ENCODE measurements at regions of chr1 and their contacts with region 1.

Region 1: DNA sequence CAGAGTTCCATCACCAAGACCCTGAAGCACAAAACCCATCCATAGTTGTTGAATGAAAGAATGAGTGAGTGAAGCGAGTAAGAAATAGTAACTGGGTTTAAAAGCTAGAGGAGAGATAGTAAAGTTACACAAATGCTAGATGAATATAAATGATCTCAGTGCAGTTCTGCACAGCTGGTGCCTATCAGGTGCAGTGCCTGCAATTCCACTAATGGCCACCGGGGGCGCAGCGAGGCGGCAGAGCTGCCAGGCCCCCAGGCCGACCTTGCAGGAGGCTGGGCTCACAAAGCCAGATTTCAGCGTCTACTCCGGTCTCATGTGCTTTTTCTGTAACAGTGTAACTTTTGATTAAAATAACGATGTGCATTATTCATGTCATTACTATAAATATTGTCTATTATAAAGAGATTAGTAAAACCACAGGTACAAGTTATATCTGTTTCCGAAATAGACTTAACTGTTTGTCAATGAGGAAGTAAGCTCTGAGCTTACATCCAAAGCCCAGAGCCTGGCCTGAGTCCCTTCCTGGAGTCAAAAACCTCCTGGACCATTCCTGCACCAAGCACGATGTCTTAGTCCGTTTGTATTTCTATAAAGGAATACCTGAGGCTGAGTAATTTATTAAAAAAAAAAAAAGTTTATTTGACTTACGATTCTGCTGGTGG is 477.6 kb downstream of the NPHP4 start:
- DNase-seq: peak; percentile 37 to 95 (median 59)
- ATAC-seq: peak; percentile 90
- H3K4me3 ChIP-seq: no peak overlapping the region
- H3K27ac ChIP-seq: no peak overlapping the region
- H3K4me1 ChIP-seq: no peaks in the 10 kb centered on the region
- H3K27me3 ChIP-seq: peaks cover 0 to 36% of the 10 kb centered on the region in 2 donors
- CTCF ChIP-seq: peak; percentile 100

Region 2: GRCh38 chr1:5745776-5746610 is 231.3 kb after region 1 on chr1:
- intact Hi-C with region 1: loop called in 1 of 2 experiments (anchors 5 kb)
- DNase-seq: peak in 3 of 4 donors; percentile 45 to 85 (median 77)
- ATAC-seq: peak; percentile 95
- H3K4me3 ChIP-seq: no peak overlapping the region
- H3K27ac ChIP-seq: no peak overlapping the region
- H3K4me1 ChIP-seq: no peaks in the 10 kb centered on the region
- H3K27me3 ChIP-seq: peaks cover 0 to 69% of the 10 kb centered on the region in 2 donors
- CTCF ChIP-seq: peak; percentile 85 to 95

Region 3: DNA sequence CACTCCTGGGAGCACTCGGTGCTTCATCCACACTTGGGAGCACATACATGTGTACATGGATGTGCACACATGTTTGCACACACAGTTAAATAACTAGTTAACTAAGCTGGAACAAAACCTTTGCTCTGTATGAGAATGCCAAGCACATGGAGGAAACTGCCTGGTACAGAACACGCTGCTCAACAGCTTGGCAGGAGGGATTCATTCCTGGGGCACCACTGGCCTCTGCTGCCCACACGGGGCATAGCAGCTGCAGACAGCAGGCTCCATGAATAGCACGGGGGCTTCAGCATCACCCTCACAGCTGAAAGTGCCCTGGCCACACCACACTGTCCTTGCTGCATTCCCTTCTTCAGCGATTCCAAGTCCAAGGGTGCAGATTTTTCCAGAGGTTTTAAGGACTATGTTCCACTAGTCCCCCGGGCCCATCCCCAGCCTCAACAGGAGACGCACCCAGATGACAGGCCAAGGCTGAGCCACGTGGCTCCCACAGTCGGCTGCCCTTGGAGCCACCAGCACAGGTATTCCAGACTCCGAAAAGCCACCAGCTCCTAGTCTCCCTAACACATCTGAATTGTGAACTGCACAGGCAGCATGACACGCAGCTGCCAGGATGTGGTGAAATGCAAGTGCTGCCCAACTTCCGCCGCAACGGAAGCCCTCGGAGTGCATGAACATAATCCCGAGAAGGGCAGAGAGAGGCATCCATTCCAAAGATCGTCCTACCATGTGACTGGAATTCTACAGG is 460.7 kb after region 1 on chr1:
- intact Hi-C with region 1: loop called in 1 of 2 experiments (anchors 10 kb)
- DNase-seq: peak in 2 of 4 donors; percentile 59 to 83
- ATAC-seq: peak; percentile 75
- H3K4me3 ChIP-seq: no peak overlapping the region
- H3K27ac ChIP-seq: peak overlapping the region in 1 of 2 donors; percentile 14
- H3K4me1 ChIP-seq: peaks cover 0 to 29% of the 10 kb centered on the region in 2 donors
- H3K27me3 ChIP-seq: no peaks in the 10 kb centered on the region
- CTCF ChIP-seq: peak; percentile 40 to 52